Activated CD4-positive, alpha-beta memory T cell treated with anti-CD3 and anti-CD28 coated beads for 36 hours (primary cell): ENCODE measurements at regions of chr16 and their contacts with region 1.

Region 1: DNA sequence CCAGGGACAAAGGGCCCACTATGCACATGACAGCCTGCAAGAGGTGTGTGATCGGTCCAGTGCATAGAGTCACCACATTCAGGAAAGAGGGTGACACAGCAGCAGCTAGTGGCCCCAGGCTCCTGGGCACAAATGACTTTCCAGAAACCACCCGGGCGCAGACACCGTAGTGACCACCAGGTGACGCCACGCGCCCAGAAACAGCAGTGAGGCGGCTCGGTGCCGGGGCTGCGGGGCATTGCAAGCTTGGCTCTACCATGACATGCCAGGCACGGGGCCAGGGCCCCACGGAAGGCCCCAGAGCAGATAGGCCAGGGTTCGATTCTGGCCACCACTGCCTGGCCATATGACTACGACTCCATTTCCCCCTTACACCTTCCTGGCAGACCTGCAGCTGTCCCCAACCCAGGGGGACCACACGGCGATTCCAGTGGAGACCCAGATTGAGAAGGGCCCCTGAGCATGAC is 6.7 kb downstream of the RHBDF1 start:
- DNase-seq: peak; percentile 93
- H3K4me3 Mint-ChIP-seq: no peak overlapping the region
- H3K27ac Mint-ChIP-seq: no peak overlapping the region
- H3K4me1 Mint-ChIP-seq: no peaks in the 10 kb centered on the region
- H3K27me3 Mint-ChIP-seq: peaks cover 3% of the 10 kb centered on the region

Region 2: GRCh38 chr16:77807-78443 is 12.2 kb after region 1 on chr16 and contains the start of gene MPG:
- CTCF ChIA-PET with region 1: interaction called, 37 read pairs
- POLR2A ChIA-PET with region 1: interaction called, 5 read pairs
- intact Hi-C with region 1: no loop called
- DNase-seq: peak; percentile 88
- H3K4me3 Mint-ChIP-seq: peak within 1 kb of the TSS; percentile 85
- H3K27ac Mint-ChIP-seq: peak within 1 kb of the TSS; percentile 85
- H3K4me1 Mint-ChIP-seq: peaks cover 33% of the 10 kb centered on the region
- H3K27me3 Mint-ChIP-seq: peaks cover 14% of the 10 kb centered on the region
- total RNA-seq, gene MPG: 53.1 to 58.7 TPM

Region 3: GRCh38 chr16:96935-97381 is 31.3 kb after region 1 on chr16:
- CTCF ChIA-PET with region 1: interaction called, 384 read pairs
- POLR2A ChIA-PET with region 1: interaction called, 5 read pairs
- intact Hi-C with region 1: loop called (anchors 1 kb)
- DNase-seq: peak; percentile 94
- H3K4me3 Mint-ChIP-seq: no peak overlapping the region
- H3K27ac Mint-ChIP-seq: no peak overlapping the region
- H3K4me1 Mint-ChIP-seq: peaks cover 3% of the 10 kb centered on the region
- H3K27me3 Mint-ChIP-seq: no peaks in the 10 kb centered on the region

Region 4: GRCh38 chr16:180938-181667 is 115.4 kb after region 1 on chr16:
- CTCF ChIA-PET with region 1: interaction called, 23 read pairs
- POLR2A ChIA-PET with region 1: no interaction called
- intact Hi-C with region 1: no loop called
- DNase-seq: peak; percentile 89
- H3K4me3 Mint-ChIP-seq: peak overlapping the region; percentile 20
- H3K27ac Mint-ChIP-seq: no peak overlapping the region
- H3K4me1 Mint-ChIP-seq: no peaks in the 10 kb centered on the region
- H3K27me3 Mint-ChIP-seq: peaks cover 22% of the 10 kb centered on the region

Region 5: DNA sequence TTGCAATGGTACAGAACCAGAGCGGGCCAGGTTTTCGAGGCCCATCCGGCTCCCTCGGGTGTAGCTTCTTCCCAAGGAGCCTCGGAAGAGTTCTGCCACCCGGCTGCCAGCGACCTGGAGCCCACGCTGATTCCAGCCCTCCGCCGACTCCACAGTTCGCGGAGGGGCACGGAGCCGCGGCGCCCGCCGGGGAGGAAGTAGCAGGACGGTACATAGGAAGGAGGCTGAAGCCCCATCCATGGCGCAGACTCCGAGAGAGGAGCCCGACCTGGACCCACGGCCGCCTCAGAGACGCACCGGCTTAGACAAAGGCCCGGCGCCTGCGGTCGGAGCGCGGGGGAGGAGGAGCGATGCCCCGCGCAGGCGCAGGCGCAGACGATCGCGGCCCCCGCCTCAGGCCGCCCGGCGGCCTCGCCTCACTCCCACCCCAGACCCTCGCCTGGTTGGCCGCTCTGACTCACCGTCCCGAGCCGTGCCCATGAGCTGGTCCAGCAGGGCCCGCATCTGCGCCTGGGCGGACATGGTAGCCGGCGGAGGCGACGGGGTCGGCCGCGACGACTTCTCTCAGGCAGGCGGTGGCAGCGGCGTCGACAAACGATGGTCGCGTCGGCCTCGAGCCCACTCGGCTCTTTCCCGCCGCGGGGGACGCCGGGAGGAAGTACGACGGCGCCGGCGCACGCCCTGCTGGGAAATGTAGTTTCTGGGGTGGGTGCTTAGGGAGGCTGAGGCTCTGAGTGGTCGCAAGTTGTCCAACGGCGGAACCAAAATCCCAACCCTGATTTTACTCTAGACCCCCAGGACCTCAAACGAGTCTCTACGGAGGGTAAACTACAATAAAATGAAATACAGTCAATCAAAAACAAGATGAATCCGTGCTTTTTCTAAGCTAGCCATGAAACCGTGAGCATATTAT is 163.4 kb after region 1 on chr16 and contains the start of gene LUC7L:
- CTCF ChIA-PET with region 1: no interaction called
- POLR2A ChIA-PET with region 1: no interaction called
- intact Hi-C with region 1: no loop called
- DNase-seq: peak; percentile 91
- H3K4me3 Mint-ChIP-seq: peak within 1 kb of the TSS; percentile 89
- H3K27ac Mint-ChIP-seq: peak within 1 kb of the TSS; percentile 89
- H3K4me1 Mint-ChIP-seq: peaks cover 31% of the 10 kb centered on the region
- H3K27me3 Mint-ChIP-seq: no peaks in the 10 kb centered on the region
- total RNA-seq, gene LUC7L: 57.0 to 60.8 TPM

Region 6: DNA sequence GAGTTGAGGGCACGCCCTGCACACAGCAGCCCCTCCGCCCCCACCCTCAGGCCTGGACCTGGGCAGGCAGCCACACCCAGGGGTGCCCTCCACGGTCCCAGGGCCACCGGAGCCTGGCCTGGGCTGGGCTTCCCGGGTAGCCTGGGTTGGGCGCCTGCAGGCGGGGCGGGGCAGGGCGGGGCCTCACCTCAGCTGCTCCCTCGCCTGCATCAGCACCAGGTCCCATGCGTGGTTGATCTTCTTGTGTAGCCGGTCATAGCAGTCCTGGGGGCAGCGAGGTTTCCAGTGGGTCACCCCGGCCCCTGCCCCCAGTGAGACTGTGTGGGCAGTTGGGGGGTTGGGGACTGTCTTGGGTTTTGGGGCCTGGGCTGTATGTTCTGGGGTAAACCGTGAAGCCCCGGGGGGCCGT is 207.9 kb after region 1 on chr16:
- CTCF ChIA-PET with region 1: no interaction called
- POLR2A ChIA-PET with region 1: no interaction called
- intact Hi-C with region 1: no loop called
- DNase-seq: no peak
- H3K4me3 Mint-ChIP-seq: no peak overlapping the region
- H3K27ac Mint-ChIP-seq: no peak overlapping the region
- H3K4me1 Mint-ChIP-seq: peaks cover 3% of the 10 kb centered on the region
- H3K27me3 Mint-ChIP-seq: peaks cover 12% of the 10 kb centered on the region